Esophagus muscularis mucosa (tissue), 4 donors: ENCODE measurements at regions of chr13 and their contacts with region 1.

Region 1: GRCh38 chr13:28658796-28659620 is at the start of gene POMP:
- DNase-seq: peak; percentile 97
- H3K4me3 ChIP-seq: peak within 1 kb of the TSS; percentile 69 to 97 (median 80)
- H3K27ac ChIP-seq: peak within 1 kb of the TSS; percentile 89 to 94 (median 92)
- H3K4me1 ChIP-seq: peaks cover 39 to 61% (median 47%) of the 10 kb centered on the region in 4 donors
- H3K27me3 ChIP-seq: no peaks in the 10 kb centered on the region
- CTCF ChIP-seq: no peak
- EP300 ChIP-seq: peak; percentile 51
- POLR2A ChIP-seq: peak; percentile 96
- total RNA-seq, gene POMP: 42.7 to 83.3 (median 55.4) TPM

Region 2: DNA sequence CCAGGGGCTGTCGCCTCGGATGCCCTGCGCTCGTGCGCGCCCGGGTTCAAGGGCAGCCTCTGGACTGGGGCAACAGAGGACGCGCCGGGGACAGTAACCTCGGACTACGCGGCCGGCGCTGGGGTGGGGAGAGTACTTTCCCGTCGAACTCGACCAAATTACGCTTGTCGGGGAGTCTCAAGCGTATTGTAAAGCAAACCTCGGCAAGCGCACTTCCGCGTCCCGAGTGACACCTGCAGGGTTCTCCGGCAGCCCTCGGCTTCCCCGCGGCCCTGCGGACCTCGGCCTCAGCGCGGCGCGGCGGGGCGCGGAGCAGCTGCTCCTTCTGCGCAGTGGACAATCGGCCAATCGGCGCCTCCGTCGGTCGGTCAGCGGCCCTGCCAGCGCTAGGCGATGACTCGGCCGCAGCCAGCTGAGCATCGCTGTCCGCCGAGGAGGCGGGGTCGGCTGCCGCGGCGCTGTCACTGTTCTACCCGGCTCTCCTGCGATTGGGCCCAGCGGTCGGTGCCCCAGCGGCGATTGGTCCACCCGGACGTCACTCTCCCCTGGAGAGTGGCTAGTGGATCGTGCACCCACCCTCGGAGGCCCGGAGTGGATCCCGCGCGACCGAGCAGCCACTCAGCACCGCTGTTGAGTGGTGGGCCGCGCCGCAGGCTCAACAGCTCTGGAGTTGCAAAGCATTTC is 59.7 kb after region 1 on chr13 and contains the start of gene SLC46A3:
- intact Hi-C with region 1: loop called (anchors 2 kb)
- DNase-seq: peak; percentile 99
- H3K4me3 ChIP-seq: peak within 1 kb of the TSS; percentile 64 to 77 (median 69)
- H3K27ac ChIP-seq: peak within 1 kb of the TSS; percentile 87 to 96 (median 93)
- H3K4me1 ChIP-seq: peaks cover 18 to 34% (median 26%) of the 10 kb centered on the region in 4 donors
- H3K27me3 ChIP-seq: no peaks in the 10 kb centered on the region
- CTCF ChIP-seq: peak in 2 of 3 experiments; percentile 17 to 23
- EP300 ChIP-seq: no peak
- POLR2A ChIP-seq: peak; percentile 42
- total RNA-seq, gene SLC46A3: 9.4 to 14.0 (median 10.6) TPM

Region 3: DNA sequence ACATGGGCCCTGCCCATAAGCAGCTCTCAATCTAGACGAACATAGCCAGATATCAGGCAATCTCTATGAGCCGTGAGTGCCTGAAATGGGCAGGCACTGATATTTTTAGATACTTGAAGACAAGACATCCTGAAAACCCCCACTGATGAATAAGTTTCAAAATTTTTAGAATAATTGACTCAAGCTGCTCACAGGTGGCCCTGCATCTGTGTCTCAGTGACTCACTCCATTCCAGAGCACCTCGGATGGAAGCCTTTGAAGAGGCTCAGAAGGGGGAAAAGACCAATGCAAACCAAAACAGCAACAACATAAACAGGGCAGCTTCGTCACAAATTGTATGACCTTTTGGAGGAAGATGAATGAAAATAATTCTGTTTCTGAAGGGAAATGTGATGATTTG is 102.6 kb after region 1 on chr13:
- intact Hi-C with region 1: no loop called
- DNase-seq: no peak
- H3K4me3 ChIP-seq: no peak overlapping the region
- H3K27ac ChIP-seq: no peak overlapping the region
- H3K4me1 ChIP-seq: no peaks in the 10 kb centered on the region
- H3K27me3 ChIP-seq: no peaks in the 10 kb centered on the region
- CTCF ChIP-seq: no peak
- EP300 ChIP-seq: no peak
- POLR2A ChIP-seq: no peak